Right lobe of liver (tissue), 6 donors: ENCODE measurements at regions of chr2 and their contacts with region 1.

Region 1: GRCh38 chr2:62774555-62775366 is 69.2 kb downstream of the EHBP1 start:
- DNase-seq: peak in 1 of 3 donors; percentile 27
- ATAC-seq: peak; percentile 82 to 93 (median 88)
- H3K4me3 ChIP-seq: no peak overlapping the region
- H3K27ac ChIP-seq: peak overlapping the region in 2 of 3 donors; percentile 25 to 54
- H3K4me1 ChIP-seq: peaks cover 0 to 9% (median 0%) of the 10 kb centered on the region in 4 donors
- H3K27me3 ChIP-seq: no peaks in the 10 kb centered on the region
- CTCF ChIP-seq: peak; percentile 74 to 84 (median 79)
- POLR2A ChIP-seq: no peak

Region 2: GRCh38 chr2:62456721-62457539 is 317.8 kb before region 1 on chr2:
- intact Hi-C with region 1: loop called (anchors 10 kb)
- DNase-seq: peak; percentile 82 to 85 (median 84)
- ATAC-seq: peak; percentile 85 to 90 (median 86)
- H3K4me3 ChIP-seq: peak overlapping the region; percentile 64 to 76 (median 69)
- H3K27ac ChIP-seq: peak overlapping the region; percentile 89 to 91 (median 89)
- H3K4me1 ChIP-seq: peaks cover 0 to 37% (median 18%) of the 10 kb centered on the region in 4 donors
- H3K27me3 ChIP-seq: no peaks in the 10 kb centered on the region
- CTCF ChIP-seq: peak; percentile 92 to 99 (median 98)
- POLR2A ChIP-seq: no peak

Region 3: DNA sequence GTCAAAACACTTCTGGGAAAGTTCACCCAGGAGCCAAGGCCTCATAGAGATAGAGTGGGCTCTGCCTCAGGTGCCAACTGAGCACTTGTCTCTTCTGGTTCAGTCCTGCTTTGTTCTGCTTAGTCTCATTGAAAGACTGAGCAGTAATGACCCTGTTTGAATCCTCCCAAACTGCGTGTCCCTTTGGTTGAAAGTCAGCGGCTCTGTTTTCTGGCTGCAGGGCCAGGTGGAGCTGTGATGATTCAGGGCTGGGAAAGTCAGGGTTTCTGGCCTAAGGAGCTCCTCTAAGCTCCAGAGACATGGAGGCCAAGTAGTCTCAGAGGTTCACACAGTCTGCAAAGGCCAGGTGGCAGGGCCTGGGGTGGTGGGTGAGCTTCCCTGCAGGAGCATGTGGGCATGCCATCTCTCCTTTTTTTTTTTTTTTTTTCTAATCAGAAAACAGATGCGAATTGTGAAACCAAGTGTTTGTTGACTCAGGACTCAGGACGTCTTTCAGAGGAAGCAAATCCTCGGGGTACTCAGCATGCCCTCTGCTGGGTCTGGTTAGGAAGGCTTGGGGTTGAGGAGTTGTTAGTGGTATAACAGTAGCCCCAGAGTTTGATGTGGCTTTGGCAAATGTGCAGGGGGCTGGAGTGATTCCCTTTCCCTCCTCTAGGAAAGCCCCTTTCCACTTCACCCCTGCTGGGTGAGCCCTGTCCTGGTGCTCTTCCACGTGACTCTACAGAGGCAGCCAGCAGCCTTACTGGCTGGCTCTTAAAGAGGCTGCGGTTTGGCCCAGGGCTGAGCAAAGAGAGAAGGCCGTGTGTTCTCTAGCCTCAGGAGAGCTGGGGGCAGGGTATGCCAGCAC is 307.1 kb before region 1 on chr2:
- intact Hi-C with region 1: loop called in 1 of 2 experiments (anchors 10 kb)
- DNase-seq: peak in 2 of 3 donors; percentile 56 to 85
- ATAC-seq: peak; percentile 49 to 86 (median 75)
- H3K4me3 ChIP-seq: no peak overlapping the region
- H3K27ac ChIP-seq: peak overlapping the region; percentile 9 to 98 (median 58)
- H3K4me1 ChIP-seq: peaks cover 0 to 62% (median 12%) of the 10 kb centered on the region in 4 donors
- H3K27me3 ChIP-seq: no peaks in the 10 kb centered on the region
- CTCF ChIP-seq: peak in 1 of 4 donors; percentile 11
- POLR2A ChIP-seq: no peak

Region 4: DNA sequence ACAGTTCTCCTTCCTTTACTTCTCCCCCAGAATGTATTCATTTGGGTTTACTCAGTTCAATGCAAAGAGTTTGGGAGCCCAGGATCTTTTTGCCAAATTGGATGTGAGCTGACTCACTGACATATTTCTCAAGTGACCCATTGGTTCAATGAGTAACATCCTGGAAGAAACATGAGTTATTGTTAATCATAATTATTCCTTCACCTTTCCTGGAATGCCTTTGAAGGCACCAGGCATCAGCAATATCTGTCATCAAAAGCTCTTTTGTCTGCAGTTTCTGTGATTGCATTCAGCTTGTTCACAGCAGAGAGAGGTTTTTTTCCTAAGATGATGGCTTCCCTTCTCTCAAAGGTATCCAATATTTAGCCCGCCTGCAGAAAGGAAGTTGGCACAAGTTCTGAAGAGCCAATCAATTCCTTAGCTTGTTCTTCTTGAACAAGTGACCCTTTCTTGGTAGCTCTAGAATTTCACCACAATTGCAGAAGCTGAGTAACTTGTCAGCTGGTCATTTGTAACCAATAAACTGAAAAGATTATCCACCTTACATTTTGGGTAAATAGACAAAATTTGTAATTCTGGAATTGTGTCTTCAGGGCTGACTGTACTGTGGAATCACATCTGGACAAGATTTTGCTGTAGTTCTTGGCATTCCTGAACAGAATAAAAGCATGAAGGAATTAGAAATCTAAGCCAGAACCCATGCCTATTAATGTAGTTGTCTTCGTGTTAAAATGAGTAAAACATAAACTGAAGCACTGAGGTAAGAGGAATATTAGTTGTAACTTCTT is 196.6 kb before region 1 on chr2:
- intact Hi-C with region 1: loop called in 1 of 2 experiments (anchors 10 kb)
- DNase-seq: no peak
- ATAC-seq: peak in 1 of 4 donors; percentile 50
- H3K4me3 ChIP-seq: no peak overlapping the region
- H3K27ac ChIP-seq: no peak overlapping the region
- H3K4me1 ChIP-seq: peaks cover 0 to 4% (median 0%) of the 10 kb centered on the region in 4 donors
- H3K27me3 ChIP-seq: no peaks in the 10 kb centered on the region
- CTCF ChIP-seq: no peak
- POLR2A ChIP-seq: no peak